PC-9 (cell line): ENCODE measurements at regions of chr9 and their contacts with region 1.

Region 1: GRCh38 chr9:133030317-133031129 is at the start of gene GTF3C5:
- DNase-seq: peak; percentile 94 to 98
- H3K4me3 ChIP-seq: peak within 1 kb of the TSS; percentile 76
- H3K27ac ChIP-seq: peak within 1 kb of the TSS; percentile 57
- H3K4me1 ChIP-seq: peaks cover 25% of the 10 kb centered on the region
- H3K27me3 ChIP-seq: no peaks in the 10 kb centered on the region
- CTCF ChIP-seq: no peak
- total RNA-seq, gene GTF3C5: 79.6 and 107 TPM in 2 replicates

Region 2: DNA sequence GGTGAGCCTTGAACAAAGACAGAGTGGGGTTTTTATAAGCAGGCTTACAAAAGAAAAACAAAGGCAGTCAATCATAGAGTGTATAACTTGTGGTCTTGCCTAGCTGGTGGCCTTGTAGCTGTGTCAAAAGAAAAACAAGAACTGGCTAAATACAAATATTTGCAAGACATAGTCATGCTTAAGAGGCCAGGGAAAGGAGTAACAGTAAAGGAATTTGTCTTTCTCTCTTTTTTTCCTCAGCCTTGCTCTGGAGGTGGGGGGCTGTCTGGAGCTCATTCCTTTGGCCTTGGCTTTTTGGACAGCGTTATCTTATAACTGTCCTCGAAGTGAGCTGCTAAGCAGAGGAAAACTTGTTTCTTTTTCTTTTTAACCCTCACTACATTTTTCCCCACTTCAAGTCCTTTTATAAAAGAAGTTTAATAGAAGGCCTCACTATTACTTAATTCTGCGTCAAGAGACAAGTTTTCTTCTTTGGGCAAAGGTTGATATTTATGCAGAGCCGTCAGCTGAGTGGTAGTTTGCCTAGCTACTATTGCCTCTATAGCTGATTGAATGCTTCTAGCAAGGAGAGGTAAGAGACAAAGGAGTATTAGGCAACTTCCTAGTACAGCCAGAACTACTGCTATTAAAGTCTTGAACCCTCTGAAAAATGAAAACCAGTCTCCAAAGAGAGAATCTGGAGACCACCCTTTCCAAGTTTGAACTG is 45.6 kb after region 1 on chr9:
- CTCF ChIA-PET with region 1: no interaction called
- POLR2A ChIA-PET with region 1: no interaction called
- intact Hi-C with region 1: no loop called
- DNase-seq: peak in 1 of 2 experiments; percentile 43
- H3K4me3 ChIP-seq: no peak overlapping the region
- H3K27ac ChIP-seq: no peak overlapping the region
- H3K4me1 ChIP-seq: no peaks in the 10 kb centered on the region
- H3K27me3 ChIP-seq: peaks cover 53% of the 10 kb centered on the region
- CTCF ChIP-seq: no peak

Region 3: DNA sequence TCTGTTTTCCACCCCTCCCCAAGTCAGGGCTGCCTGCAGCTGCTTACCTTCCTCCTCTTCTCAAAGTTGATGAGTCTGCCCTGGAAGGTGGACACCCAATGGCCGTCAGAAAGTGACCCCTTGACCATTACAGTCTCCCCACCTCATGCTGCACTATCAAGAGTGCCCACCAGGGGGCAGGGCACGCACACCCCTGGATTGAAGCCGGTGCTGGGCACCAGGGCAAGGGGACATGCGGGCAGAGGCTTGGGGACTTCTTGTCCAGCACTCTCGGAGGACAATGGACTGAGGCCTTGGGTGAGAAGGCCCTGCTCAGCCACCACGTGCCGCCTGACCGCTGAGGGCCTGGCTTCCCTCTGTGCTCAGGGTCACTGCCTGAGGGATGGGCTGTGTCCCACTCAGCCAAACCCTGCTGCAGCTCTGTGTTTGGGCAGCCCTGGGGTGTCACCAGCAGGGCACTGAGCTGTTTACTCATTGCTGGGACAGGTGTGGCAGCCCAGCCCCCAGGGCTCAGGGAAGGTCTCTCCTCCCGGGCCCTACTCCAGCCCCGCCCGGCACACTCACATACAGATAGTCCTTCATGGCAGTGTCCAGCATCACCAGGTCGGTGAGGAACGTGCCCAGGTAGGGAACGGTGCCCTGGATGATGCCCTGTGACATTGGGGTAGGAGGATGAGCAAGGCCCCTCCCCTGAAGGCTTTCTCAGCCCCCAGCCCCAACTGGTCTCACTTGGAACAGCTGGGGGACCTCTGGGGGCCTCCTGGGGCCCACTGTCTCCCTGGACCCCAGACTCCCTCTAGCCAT is 72.9 kb after region 1 on chr9:
- CTCF ChIA-PET with region 1: no interaction called
- POLR2A ChIA-PET with region 1: no interaction called
- intact Hi-C with region 1: loop called (anchors 5 kb)
- DNase-seq: peak; percentile 72 to 87
- H3K4me3 ChIP-seq: no peak overlapping the region
- H3K27ac ChIP-seq: no peak overlapping the region
- H3K4me1 ChIP-seq: peaks cover 12% of the 10 kb centered on the region
- H3K27me3 ChIP-seq: no peaks in the 10 kb centered on the region
- CTCF ChIP-seq: peak; percentile 99

Region 4: GRCh38 chr9:133160742-133161546 is 130.4 kb after region 1 on chr9:
- CTCF ChIA-PET with region 1: interaction called, 14 read pairs
- POLR2A ChIA-PET with region 1: no interaction called
- intact Hi-C with region 1: no loop called
- DNase-seq: peak; percentile 50 to 71
- H3K4me3 ChIP-seq: no peak overlapping the region
- H3K27ac ChIP-seq: no peak overlapping the region
- H3K4me1 ChIP-seq: no peaks in the 10 kb centered on the region
- H3K27me3 ChIP-seq: peaks cover 17% of the 10 kb centered on the region
- CTCF ChIP-seq: peak; percentile 78

Region 5: GRCh38 chr9:133347985-133348717 is 317.6 kb after region 1 on chr9 and contains the starts of genes MED22 and RPL7A:
- CTCF ChIA-PET with region 1: no interaction called
- POLR2A ChIA-PET with region 1: interaction called, 13 read pairs
- intact Hi-C with region 1: no loop called
- DNase-seq: peak; percentile 87 to 93
- H3K4me3 ChIP-seq: peak within 1 kb of the TSS; percentile 99
- H3K27ac ChIP-seq: peak within 1 kb of the TSS; percentile 97
- H3K4me1 ChIP-seq: peaks cover 17% of the 10 kb centered on the region
- H3K27me3 ChIP-seq: no peaks in the 10 kb centered on the region
- CTCF ChIP-seq: 0 out of 2 replicates have a peak, but pooled peaks have one; percentile 17
- total RNA-seq, gene MED22: 38.2 and 38.7 TPM in 2 replicates
- total RNA-seq, gene RPL7A: 2,381 and 2,937 TPM in 2 replicates

Region 6: GRCh38 chr9:133459476-133460404 is 429.2 kb after region 1 on chr9 and contains the start of gene CACFD1:
- CTCF ChIA-PET with region 1: no interaction called
- POLR2A ChIA-PET with region 1: interaction called, 12 read pairs
- intact Hi-C with region 1: no loop called
- DNase-seq: peak; percentile 87 to 98
- H3K4me3 ChIP-seq: peak within 1 kb of the TSS; percentile 61
- H3K27ac ChIP-seq: peak within 1 kb of the TSS; percentile 67
- H3K4me1 ChIP-seq: peaks cover 13% of the 10 kb centered on the region
- H3K27me3 ChIP-seq: no peaks in the 10 kb centered on the region
- CTCF ChIP-seq: no peak
- total RNA-seq, gene CACFD1: 28.7 and 32.7 TPM in 2 replicates